H1 (cell line): ENCODE measurements at regions of chr10 and their contacts with region 1.

Region 1: DNA sequence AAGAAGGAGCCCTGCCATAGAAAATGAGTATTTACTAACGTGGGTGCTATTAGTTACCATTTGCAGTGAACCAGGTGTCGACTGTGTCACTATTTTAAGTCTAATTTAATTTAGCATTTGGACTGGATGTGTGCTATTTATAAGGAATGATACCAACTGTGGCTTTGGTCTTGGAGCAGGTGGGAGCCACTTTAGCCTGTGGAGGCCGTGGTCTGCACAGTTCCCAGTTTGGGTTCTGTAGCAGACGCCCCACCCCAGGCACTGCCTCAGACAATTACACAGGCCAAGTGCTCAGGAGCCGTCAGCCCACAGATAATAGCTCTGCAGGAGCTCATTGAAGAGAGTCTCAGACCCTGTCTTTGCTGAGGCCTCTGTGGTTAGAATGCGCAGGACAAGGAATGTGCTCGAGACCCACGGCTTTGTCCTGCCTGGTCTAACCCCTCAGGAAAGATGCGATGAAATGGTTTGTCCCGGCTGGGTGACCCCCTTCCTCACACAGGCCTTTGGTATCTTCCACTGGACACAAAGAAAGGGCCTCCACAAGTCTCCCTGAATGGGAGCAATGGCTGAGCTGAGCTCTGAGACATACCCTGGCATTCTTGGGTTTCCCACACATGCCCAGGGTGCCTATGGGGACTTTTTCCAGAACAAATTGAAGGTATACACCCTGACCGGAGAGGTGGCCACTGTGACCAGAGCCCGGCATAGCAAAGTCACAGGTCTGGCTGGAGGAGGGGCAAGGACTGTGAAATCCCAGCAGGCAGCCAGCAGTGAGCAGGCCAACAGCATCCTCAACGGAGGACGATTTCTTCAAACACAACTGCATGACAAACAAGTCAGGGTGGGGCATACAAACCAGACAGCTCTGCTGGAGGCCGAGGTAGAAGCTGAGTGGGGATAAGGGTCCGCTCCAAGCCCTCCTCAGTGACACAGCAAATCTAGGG is 251.2 kb downstream of the ARHGAP12 start:
- DNase-seq: peak; percentile 61 to 73
- H3K4me3 ChIP-seq: peak overlapping the region in 1 of 4 experiments; percentile 37; a peak in 2 of 8 replicates
- H3K27ac ChIP-seq: peak overlapping the region; percentile 82
- H3K4me1 ChIP-seq: peaks cover 6 to 10% (median 9%) of the 10 kb centered on the region in 4 experiments
- H3K27me3 ChIP-seq: no peaks in the 10 kb centered on the region
- CTCF ChIP-seq: no peak
- EP300 ChIP-seq: peak in 1 of 2 experiments; percentile 99; a peak in 2 of 3 replicates
- POLR2A ChIP-seq: peak; percentile 48 to 64
- RAD21 ChIP-seq: no peak; a peak in 1 of 4 replicates

Region 2: GRCh38 chr10:31650010-31650409 is 27.5 kb before region 1 on chr10:
- CTCF ChIA-PET with region 1: no interaction called
- POLR2A ChIA-PET with region 1: no interaction called
- DNase-seq: no peak
- H3K4me3 ChIP-seq: no peak overlapping the region
- H3K27ac ChIP-seq: no peak overlapping the region
- H3K4me1 ChIP-seq: no peaks in the 10 kb centered on the region
- H3K27me3 ChIP-seq: no peaks in the 10 kb centered on the region
- CTCF ChIP-seq: no peak
- EP300 ChIP-seq: no peak
- POLR2A ChIP-seq: no peak
- RAD21 ChIP-seq: no peak

Region 3: GRCh38 chr10:31664803-31665202 is 12.7 kb before region 1 on chr10:
- CTCF ChIA-PET with region 1: no interaction called
- POLR2A ChIA-PET with region 1: interaction called, 16 read pairs
- DNase-seq: no peak
- H3K4me3 ChIP-seq: no peak overlapping the region
- H3K27ac ChIP-seq: no peak overlapping the region
- H3K4me1 ChIP-seq: peaks cover 6 to 20% (median 10%) of the 10 kb centered on the region in 4 experiments; a peak in 5 of 7 replicates
- H3K27me3 ChIP-seq: no peaks in the 10 kb centered on the region; a peak in 1 of 7 replicates
- CTCF ChIP-seq: no peak
- EP300 ChIP-seq: no peak
- POLR2A ChIP-seq: no peak
- RAD21 ChIP-seq: no peak